Endothelial cell of umbilical vein (primary cell): ENCODE measurements at regions of chr7 and their contacts with region 1.

Region 1: DNA sequence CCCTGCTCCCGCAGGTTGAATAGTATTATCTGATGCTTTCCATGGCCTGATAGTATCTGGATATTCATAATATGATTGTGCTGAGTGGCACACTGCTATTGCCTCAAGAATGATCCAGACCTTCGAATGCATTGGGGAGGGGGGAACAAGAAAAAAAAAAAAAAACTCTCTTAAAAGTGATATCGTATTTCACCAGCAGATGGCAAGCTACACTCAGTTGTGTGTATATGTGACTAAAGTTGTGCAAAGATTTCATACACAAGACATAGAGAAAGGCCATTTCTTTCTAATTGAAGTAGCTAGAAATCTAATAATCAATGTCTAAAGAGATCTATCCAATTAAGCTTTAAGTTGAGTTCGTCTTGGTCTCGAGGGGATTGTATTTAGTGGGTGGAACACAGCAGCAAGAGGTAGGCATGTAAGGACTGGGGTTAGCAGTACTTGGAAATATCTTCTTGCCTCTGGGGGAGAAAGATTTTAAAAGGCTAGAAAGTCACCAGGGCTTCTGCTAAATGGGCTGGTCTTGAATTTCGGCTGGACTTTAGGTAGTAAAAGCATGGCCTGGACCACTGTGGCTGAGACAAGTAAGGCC is 15.3 kb downstream of the SFRP4 start:
- DNase-seq: peak; percentile 52
- H3K4me3 ChIP-seq: no peak overlapping the region
- H3K27ac ChIP-seq: no peak overlapping the region
- H3K4me1 ChIP-seq: no peaks in the 10 kb centered on the region
- H3K27me3 ChIP-seq: no peaks in the 10 kb centered on the region
- CTCF ChIP-seq: peak; percentile 18 to 35
- POLR2A ChIP-seq: no peak

Region 2: GRCh38 chr7:37770838-37771237 is 130.5 kb before region 1 on chr7:
- CTCF ChIA-PET with region 1: no interaction called
- POLR2A ChIA-PET with region 1: no interaction called
- dilution Hi-C with region 1: no loop called
- intact Hi-C with region 1: no loop called
- DNase-seq: no peak
- H3K4me3 ChIP-seq: no peak overlapping the region
- H3K27ac ChIP-seq: no peak overlapping the region
- H3K4me1 ChIP-seq: no peaks in the 10 kb centered on the region
- H3K27me3 ChIP-seq: no peaks in the 10 kb centered on the region
- CTCF ChIP-seq: no peak
- POLR2A ChIP-seq: no peak

Region 3: DNA sequence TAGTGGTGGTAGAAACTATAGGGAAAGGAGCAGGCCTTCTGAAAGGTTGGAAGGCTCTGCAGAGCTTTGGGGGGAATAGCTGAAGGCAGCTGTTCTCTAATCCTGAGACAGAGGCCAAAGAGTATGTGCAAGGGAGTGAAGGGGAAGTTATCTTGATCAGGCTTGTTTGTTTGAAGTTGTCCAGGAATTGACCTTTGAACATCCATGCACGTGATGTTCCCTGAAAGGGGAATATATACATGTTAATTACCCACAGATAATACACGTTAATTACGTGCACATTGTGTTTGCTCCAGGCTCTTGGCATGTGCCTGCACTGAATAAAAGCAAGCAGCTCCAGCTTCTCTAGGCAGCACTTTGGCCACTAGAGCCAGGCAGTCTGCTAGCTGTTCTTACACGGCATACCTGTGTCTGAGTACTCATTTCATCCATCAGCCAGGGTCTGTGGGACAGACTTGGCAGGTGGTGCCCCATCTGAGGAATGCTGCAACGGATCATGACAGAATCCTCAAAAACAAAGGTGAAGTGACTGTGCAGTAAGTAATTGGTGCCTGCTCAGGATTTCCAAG is 258.8 kb after region 1 on chr7:
- CTCF ChIA-PET with region 1: no interaction called
- POLR2A ChIA-PET with region 1: no interaction called
- dilution Hi-C with region 1: no loop called
- intact Hi-C with region 1: no loop called
- DNase-seq: no peak
- H3K4me3 ChIP-seq: no peak overlapping the region
- H3K27ac ChIP-seq: no peak overlapping the region
- H3K4me1 ChIP-seq: no peaks in the 10 kb centered on the region
- H3K27me3 ChIP-seq: peaks cover 3 to 8% of the 10 kb centered on the region in 2 experiments
- CTCF ChIP-seq: no peak
- POLR2A ChIP-seq: no peak

Region 4: DNA sequence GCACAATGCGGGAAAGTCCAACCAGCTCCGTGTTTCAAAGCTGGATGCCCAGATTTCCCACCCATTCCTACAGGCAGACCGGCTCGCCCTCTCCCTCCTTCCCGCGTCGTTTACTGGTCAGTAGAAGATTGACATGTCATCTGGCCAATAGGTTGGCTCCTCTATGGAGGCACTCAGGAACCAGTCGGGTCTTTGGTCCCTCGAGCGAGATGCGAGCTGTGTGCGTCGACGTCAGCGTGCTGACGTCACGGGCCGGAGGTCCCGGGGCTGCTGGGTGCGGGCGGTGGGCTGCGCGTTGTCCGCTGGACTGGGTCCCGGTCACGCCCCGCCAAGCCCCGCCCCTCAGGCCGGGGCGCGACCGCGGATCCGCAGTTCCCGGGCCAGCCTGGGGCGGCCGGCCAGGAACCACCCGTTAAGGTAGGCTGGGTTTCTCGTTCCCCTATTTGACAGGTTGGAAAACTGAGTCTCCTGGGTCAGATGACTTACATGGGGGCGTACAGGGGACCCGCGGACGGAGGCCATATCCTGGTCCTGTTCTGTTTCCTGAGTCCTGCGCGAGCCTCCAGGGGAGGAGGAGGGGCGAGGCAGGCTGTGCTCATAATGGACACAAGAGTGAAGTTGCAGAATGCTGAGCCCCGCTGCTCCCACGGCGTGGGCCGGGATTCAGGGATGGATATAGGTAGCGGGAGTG is 276.8 kb after region 1 on chr7 and contains the start of gene STARD3NL:
- CTCF ChIA-PET with region 1: no interaction called
- POLR2A ChIA-PET with region 1: no interaction called
- dilution Hi-C with region 1: no loop called
- intact Hi-C with region 1: no loop called
- DNase-seq: peak; percentile 100
- H3K4me3 ChIP-seq: peak within 1 kb of the TSS; percentile 78 to 88 (median 85)
- H3K27ac ChIP-seq: peak within 1 kb of the TSS; percentile 88
- H3K4me1 ChIP-seq: peaks cover 34% of the 10 kb centered on the region
- H3K27me3 ChIP-seq: peaks cover 2 to 16% of the 10 kb centered on the region in 2 experiments
- CTCF ChIP-seq: no peak
- POLR2A ChIP-seq: peak; percentile 71
- total RNA-seq, gene STARD3NL: 68.9 and 73.6 TPM in 2 replicates

Region 5: DNA sequence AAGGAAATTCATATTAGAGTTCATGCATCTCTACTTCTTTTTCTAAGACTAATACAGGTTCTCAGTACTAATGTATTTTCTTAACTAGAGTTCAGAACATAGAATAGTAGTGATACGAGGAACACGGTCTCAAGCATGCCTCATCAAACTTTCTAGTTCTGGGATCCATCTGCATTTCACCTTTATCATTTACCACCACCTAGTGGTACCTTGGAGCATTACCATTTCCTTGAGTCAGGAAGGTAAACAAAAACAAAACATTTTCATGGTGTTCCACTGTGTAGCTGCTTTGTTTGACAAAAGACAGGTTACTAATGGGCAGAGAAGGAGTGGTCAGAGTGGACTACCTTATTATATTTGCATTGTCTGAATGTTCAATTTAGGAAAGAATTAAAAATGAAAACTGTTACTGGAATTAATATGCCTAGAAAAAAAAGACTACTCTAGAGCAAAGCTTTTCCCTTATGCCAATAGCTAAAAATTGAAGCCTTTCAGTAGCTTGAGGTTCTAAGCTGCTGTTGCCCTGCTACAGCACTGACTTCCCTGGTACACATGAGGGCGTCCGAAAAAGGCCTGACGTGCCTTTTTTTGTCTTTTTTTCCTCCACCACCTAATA is 321.3 kb after region 1 on chr7:
- CTCF ChIA-PET with region 1: no interaction called
- POLR2A ChIA-PET with region 1: no interaction called
- dilution Hi-C with region 1: no loop called
- intact Hi-C with region 1: loop called (anchors 1 kb)
- DNase-seq: peak; percentile 75
- H3K4me3 ChIP-seq: no peak overlapping the region
- H3K27ac ChIP-seq: no peak overlapping the region
- H3K4me1 ChIP-seq: no peaks in the 10 kb centered on the region
- H3K27me3 ChIP-seq: no peaks in the 10 kb centered on the region
- CTCF ChIP-seq: peak; percentile 47 to 63
- POLR2A ChIP-seq: no peak